ENCODE measurements at regions of chrX and their contacts with region 1.

Region 1: DNA sequence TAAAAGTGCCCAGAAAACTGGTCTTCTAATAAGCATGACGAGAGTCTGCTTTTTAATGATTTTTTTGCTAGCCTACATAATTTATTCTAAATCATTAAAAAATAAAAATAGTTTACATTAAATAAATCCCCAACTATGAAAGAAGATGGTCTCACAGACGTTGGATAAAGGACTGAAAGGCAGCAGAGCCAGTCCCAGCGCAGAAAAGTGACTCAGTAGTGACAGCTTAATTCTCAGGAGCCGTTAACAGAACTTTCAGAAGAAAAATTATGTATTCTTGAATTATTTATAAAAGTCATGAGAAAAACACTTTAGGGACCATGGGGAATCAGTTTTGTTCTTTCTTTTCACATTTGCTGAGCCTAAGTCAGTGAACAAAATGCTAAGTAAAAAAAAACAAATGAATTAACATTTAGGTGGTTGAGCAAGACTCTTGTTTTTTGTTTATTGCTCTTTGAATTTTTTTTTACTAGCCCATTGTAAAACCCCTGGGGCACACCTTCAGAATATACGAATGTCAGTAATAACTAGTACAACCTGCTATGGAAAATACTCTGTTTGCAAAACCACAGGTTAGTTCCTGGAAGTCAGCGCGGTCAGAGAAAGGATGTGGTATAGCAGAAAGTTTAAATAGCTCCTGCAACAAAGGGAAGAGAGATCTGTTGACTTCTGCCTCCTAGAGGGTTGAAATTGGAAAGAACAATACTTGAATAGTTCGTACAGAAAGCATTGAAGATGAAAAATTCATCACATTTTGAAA is 50.4 kb upstream of the CCDC160 start:
- DNase-seq: peak; percentile 78
- ATAC-seq: peak; percentile 88
- H3K4me3 Mint-ChIP-seq: peak overlapping the region; percentile 64
- H3K27ac Mint-ChIP-seq: peak overlapping the region; percentile 51
- H3K4me1 Mint-ChIP-seq: peaks cover 16% of the 10 kb centered on the region
- H3K27me3 Mint-ChIP-seq: peaks cover 3% of the 10 kb centered on the region

Region 2: DNA sequence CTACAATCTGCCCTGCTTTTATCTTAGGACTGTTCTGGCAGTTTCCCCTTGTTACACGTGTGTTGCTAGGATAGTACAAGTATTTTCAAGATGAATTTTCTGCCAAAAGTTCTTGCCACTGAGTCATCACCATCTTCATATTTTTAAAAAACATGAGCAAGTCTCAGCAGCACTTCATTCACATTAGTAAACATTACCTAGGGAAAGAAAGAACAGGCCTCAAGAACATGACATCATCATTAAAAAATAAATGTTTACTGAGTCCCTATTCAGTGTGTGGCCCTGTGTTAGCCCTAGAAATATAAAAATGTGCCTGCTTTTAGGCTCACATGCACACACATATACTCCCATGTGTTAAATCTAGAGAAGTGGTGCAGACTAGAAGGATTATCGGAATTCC is 182.5 kb before region 1 on chrX:
- CTCF ChIA-PET with region 1: no interaction called
- POLR2A ChIA-PET with region 1: no interaction called
- intact Hi-C with region 1: loop called in 1 of 2 experiments (anchors 2 kb)
- DNase-seq: no peak
- ATAC-seq: peak; percentile 37
- H3K4me3 Mint-ChIP-seq: no peak overlapping the region
- H3K27ac Mint-ChIP-seq: no peak overlapping the region
- H3K4me1 Mint-ChIP-seq: peaks cover 11% of the 10 kb centered on the region
- H3K27me3 Mint-ChIP-seq: peaks cover 2% of the 10 kb centered on the region

Region 3: DNA sequence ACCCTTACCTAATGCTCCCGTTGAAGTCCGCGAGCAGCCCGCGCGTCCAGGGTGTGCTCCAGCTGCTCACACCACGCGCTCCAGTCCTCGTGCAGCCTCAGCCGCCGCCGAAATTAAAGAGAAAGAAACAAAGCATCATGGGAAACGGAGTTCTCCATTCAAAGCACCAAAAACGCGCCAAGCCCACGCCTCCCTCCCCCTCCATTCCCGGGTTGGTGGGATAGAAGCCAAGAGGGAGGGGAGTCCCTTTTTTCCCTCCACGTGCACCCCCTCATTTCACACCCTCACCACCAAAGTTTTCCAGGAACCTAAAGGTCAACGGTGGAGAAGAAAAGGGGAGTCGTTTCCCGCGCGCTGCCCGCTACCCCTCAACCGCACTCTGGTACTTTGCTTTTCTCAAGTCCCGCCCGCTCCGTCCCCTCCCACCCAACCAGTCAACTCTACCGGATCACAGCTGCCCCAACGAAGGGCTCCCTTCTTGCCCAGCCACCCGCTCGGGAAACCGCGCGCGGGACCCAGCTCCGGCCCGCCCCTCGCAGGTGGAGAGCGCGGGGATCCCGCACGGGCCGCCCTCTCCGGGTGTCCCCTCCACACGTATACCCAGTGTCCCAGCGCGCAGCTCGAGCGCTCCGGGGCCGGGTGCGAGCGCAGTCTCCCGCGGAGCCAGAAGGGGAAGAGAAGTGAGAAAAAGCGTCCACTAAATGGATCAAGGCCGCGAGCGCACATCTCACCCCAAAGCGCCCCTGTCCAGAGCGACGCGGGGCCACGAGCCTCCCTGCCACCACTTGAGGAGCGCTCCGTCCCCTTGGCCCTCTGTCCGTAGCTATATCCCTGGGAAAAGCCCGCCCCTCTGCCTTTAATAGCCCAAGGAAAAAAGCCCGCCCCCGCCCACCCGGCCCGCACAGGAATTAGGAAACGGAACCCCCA is 14.6 kb before region 1 on chrX:
- CTCF ChIA-PET with region 1: interaction called, 4 read pairs
- POLR2A ChIA-PET with region 1: no interaction called
- intact Hi-C with region 1: loop called (anchors 2 kb)
- DNase-seq: peak; percentile 70
- ATAC-seq: peak; percentile 61
- H3K4me3 Mint-ChIP-seq: peak overlapping the region; percentile 82
- H3K27ac Mint-ChIP-seq: peak overlapping the region; percentile 89
- H3K4me1 Mint-ChIP-seq: peaks cover 17% of the 10 kb centered on the region
- H3K27me3 Mint-ChIP-seq: peaks cover 10% of the 10 kb centered on the region

Region 4: GRCh38 chrX:134469486-134469885 is 282.9 kb after region 1 on chrX:
- CTCF ChIA-PET with region 1: no interaction called
- POLR2A ChIA-PET with region 1: no interaction called
- intact Hi-C with region 1: no loop called
- DNase-seq: no peak
- ATAC-seq: no peak
- H3K4me3 Mint-ChIP-seq: no peak overlapping the region
- H3K27ac Mint-ChIP-seq: no peak overlapping the region
- H3K4me1 Mint-ChIP-seq: peaks cover 6% of the 10 kb centered on the region
- H3K27me3 Mint-ChIP-seq: no peaks in the 10 kb centered on the region

Measured in activated CD4-positive, alpha-beta T cell treated with anti-CD3 and anti-CD28 coated beads for 36 hours (primary cell).